ENCODE measurements at regions of chr2 and their contacts with region 1.

Region 1: DNA sequence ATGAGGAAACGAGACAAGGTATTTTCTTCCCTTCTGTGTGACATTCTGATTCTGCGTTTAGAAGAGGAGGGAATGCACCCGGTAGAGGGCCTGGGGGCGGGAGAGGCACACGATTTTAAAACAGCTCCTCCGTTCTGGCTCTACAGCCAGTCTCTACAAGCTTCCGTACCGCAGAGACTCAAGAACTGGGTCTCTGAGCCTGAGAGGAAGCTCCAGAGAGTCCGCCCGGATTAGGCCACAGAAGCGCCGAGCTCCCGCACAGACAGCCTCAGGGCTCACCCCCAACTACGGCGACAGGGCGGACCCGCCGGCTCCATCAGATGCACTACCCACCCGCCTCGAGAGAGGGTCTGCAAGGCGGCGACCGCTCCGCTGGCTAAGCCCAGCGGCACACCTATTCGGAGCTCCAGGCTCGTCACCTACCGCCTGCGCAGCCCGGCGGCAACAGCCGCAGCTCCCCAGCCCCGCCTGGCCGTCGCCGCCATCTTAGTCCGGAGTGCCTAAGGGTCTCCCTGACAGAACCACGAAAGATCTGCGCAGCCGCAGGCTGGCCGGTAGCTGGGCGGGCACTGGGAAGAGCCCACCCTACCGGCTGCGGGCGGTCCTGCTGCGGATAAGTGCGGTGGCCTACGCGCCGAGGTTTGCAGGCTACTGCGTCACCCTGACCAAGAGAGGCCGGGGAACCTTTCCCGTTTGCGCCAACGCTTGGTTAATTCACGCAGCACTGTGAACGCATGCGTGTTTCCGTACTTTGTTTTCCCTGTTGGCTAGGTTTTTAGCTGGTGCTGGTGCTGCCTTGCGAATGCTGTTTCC is at the start of gene NFU1:
- DNase-seq: peak; percentile 90
- H3K4me3 Mint-ChIP-seq: peak within 1 kb of the TSS; percentile 95
- H3K27ac Mint-ChIP-seq: peak within 1 kb of the TSS; percentile 94
- H3K4me1 Mint-ChIP-seq: peaks cover 29% of the 10 kb centered on the region
- H3K27me3 Mint-ChIP-seq: no peaks in the 10 kb centered on the region
- total RNA-seq, gene NFU1: 35.7 to 39.3 TPM

Region 2: GRCh38 chr2:68994864-68995263 is 442.3 kb before region 1 on chr2:
- CTCF ChIA-PET with region 1: no interaction called
- intact Hi-C with region 1: no loop called
- DNase-seq: no peak
- H3K4me3 Mint-ChIP-seq: no peak overlapping the region
- H3K27ac Mint-ChIP-seq: no peak overlapping the region
- H3K4me1 Mint-ChIP-seq: no peaks in the 10 kb centered on the region
- H3K27me3 Mint-ChIP-seq: peaks cover 6% of the 10 kb centered on the region

Region 3: GRCh38 chr2:69453475-69454129 is 16.5 kb after region 1 on chr2:
- CTCF ChIA-PET with region 1: interaction called, 5 read pairs
- intact Hi-C with region 1: loop called (anchors 1 kb)
- DNase-seq: peak; percentile 72
- H3K4me3 Mint-ChIP-seq: no peak overlapping the region
- H3K27ac Mint-ChIP-seq: no peak overlapping the region
- H3K4me1 Mint-ChIP-seq: peaks cover 24% of the 10 kb centered on the region
- H3K27me3 Mint-ChIP-seq: no peaks in the 10 kb centered on the region

Region 4: DNA sequence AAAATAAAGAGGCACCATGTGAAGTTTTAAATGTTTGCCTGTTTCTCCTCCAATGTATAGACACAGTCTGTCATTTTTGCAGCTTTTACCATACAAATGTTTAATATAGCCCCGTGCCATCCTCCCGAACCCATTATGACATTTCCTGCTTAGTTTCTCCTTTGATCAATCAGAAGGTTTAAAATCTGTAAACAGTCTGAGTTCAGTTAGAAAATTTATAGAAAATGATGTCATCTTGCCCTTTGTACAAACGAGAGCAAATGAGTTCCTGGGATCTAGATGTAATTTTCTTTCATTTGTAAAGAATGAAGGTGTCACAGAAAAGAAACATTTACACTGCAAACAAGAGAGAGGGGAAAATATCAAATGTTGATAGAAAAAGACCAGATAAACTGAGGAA is 62.8 kb after region 1 on chr2:
- CTCF ChIA-PET with region 1: no interaction called
- intact Hi-C with region 1: loop called (anchors 2 kb)
- DNase-seq: peak; percentile 36
- H3K4me3 Mint-ChIP-seq: peak overlapping the region; percentile 41
- H3K27ac Mint-ChIP-seq: peak overlapping the region; percentile 84
- H3K4me1 Mint-ChIP-seq: peaks cover 28% of the 10 kb centered on the region
- H3K27me3 Mint-ChIP-seq: no peaks in the 10 kb centered on the region

Measured in activated naive CD4-positive, alpha-beta T cell treated with anti-CD3 and anti-CD28 coated beads for 36 hours (primary cell).